ENCODE measurements at regions of chr17 and their contacts with region 1.

Region 1: GRCh38 chr17:28494445-28495188 is 11.5 kb upstream of the FOXN1 start:
- DNase-seq: no peak
- H3K4me3 ChIP-seq: no peak overlapping the region
- H3K27ac ChIP-seq: no peak overlapping the region
- H3K4me1 ChIP-seq: peaks cover 0 to 33% (median 13%) of the 10 kb centered on the region in 3 donors
- H3K27me3 ChIP-seq: peaks cover 0 to 32% (median 0%) of the 10 kb centered on the region in 4 donors
- CTCF ChIP-seq: peak; percentile 82 to 95 (median 92)
- POLR2A ChIP-seq: no peak

Region 2: DNA sequence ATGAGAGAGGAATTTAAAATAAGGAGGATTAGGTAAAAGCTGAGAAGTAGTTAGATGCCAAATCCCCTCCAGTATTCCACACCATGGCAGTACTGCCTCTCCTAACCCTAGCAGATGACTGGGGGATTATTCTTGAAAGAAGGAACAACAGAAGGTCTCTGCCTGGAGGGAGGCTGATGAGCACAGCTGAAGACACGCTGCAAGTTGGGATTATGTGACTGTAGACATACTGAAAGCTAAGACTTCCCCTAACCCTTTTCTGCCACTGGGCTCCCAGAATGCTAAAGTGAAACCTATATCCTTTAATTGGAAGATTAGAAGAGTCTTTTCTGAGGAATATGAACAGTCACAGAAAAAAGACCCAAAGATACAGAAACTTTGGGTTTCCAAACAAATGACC is 60.9 kb before region 1 on chr17:
- intact Hi-C with region 1: no loop called
- DNase-seq: no peak
- H3K4me3 ChIP-seq: no peak overlapping the region
- H3K27ac ChIP-seq: no peak overlapping the region
- H3K4me1 ChIP-seq: no peaks in the 10 kb centered on the region
- H3K27me3 ChIP-seq: peaks cover 0 to 29% (median 0%) of the 10 kb centered on the region in 4 donors
- CTCF ChIP-seq: no peak
- POLR2A ChIP-seq: no peak

Region 3: DNA sequence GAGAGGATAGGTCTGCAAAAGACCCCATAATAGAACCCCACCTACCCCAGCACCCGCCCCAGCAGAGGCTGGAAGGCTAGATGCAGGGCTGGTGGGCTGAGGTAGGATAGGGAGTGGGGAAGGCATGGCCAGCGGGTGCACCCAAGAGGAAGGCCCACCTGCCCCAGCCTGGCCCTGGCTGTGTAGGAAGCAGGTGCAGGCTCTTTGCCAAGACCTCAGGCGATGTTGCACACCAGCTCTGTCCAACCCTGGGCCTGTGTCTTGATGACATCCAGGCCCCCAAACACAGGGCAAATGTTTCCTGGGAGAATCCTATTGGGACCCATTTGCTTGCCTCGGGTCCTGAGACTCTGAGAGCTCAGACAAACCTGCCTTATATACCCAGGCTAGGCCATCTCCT is 45.6 kb after region 1 on chr17:
- intact Hi-C with region 1: loop called (anchors 2 kb)
- DNase-seq: no peak
- H3K4me3 ChIP-seq: no peak overlapping the region
- H3K27ac ChIP-seq: no peak overlapping the region
- H3K4me1 ChIP-seq: peaks cover 0 to 12% (median 0%) of the 10 kb centered on the region in 3 donors
- H3K27me3 ChIP-seq: no peaks in the 10 kb centered on the region
- CTCF ChIP-seq: no peak
- POLR2A ChIP-seq: no peak

Region 4: GRCh38 chr17:28612936-28613872 is 118.6 kb after region 1 on chr17:
- intact Hi-C with region 1: loop called (anchors 10 kb)
- DNase-seq: no peak
- H3K4me3 ChIP-seq: no peak overlapping the region
- H3K27ac ChIP-seq: no peak overlapping the region
- H3K4me1 ChIP-seq: no peaks in the 10 kb centered on the region
- H3K27me3 ChIP-seq: no peaks in the 10 kb centered on the region
- CTCF ChIP-seq: peak in 4 of 6 experiments; percentile 20 to 50 (median 46)
- POLR2A ChIP-seq: no peak